ENCODE measurements at regions of chr1 and their contacts with region 1.

Region 1: GRCh38 chr1:154479764-154480421 is 22.1 kb upstream of the TDRD10 start:
- DNase-seq: peak in 5 of 10 donors; percentile 61 to 84 (median 62)

Region 2: DNA sequence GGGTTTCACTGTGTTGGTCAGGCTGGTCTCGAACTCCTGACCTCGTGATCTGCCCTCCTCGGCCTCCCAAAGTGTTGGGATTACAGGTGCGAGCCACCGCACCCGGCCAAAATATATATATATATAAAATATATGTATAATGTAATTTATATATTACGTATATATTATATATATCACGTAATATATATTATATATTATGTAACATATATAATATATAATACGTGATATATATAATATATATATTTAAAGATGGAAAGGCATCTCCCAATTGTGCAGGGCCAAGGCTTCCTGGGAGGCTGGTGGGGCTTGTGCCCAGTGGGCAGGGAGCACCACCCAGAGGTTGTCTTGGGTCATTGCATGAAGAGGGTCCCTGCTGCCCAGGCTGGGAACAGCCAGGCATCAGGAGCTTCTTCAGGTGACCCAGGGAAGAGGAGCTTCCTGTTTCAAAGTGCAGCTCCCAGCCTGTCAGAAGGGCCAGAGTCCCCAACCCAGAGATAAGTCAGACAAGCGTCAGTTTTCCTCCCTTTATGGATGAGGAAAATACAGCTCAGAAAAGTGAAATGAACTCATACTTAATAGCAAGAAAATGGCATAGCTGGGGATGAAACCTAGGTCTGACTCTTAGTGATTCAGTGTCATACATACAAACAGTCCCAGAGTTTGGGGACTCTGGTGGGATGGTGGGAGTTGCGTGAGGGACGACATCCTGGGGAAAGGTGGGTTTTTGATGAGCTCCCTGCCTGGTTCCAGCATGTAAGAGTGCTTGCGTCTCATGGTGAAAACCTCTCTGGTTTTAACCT is 66.6 kb after region 1 on chr1:
- intact Hi-C with region 1: loop called (anchors 1 kb)
- DNase-seq: peak in 9 of 10 donors; percentile 26 to 95 (median 51)